CD8-positive, alpha-beta T cell (primary cell): ENCODE measurements at regions of chr11 and their contacts with region 1.

Region 1: GRCh38 chr11:123478352-123478987 is 48.4 kb downstream of the GRAMD1B start:
- DNase-seq: peak in 5 of 9 experiments; percentile 12 to 76 (median 59)
- ATAC-seq: peak; percentile 37
- H3K4me3 ChIP-seq: peak overlapping the region in 1 of 2 experiments; percentile 2
- H3K4me3 Mint-ChIP-seq: peak overlapping the region; percentile 13
- H3K27ac ChIP-seq: no peak overlapping the region
- H3K27ac Mint-ChIP-seq: no peak overlapping the region
- H3K4me1 ChIP-seq: no peaks in the 10 kb centered on the region
- H3K4me1 Mint-ChIP-seq: peaks cover 18% of the 10 kb centered on the region
- H3K27me3 ChIP-seq: no peaks in the 10 kb centered on the region
- H3K27me3 Mint-ChIP-seq: no peaks in the 10 kb centered on the region
- CTCF ChIP-seq: peak; percentile 93

Region 2: GRCh38 chr11:122981388-122982264 is 496.8 kb before region 1 on chr11 and contains the start of gene BSX:
- CTCF ChIA-PET with region 1: no interaction called
- POLR2A ChIA-PET with region 1: no interaction called
- intact Hi-C with region 1: no loop called
- DNase-seq: peak; percentile 24 to 65 (median 60)
- ATAC-seq: peak; percentile 79
- H3K4me3 ChIP-seq: no peak within 1 kb of the TSS
- H3K4me3 Mint-ChIP-seq: no peak within 1 kb of the TSS
- H3K27ac ChIP-seq: no peak within 1 kb of the TSS
- H3K27ac Mint-ChIP-seq: no peak within 1 kb of the TSS
- H3K4me1 ChIP-seq: peaks cover 23% of the 10 kb centered on the region
- H3K4me1 Mint-ChIP-seq: peaks cover 35% of the 10 kb centered on the region
- H3K27me3 ChIP-seq: peaks cover 44 to 70% of the 10 kb centered on the region in 2 experiments
- H3K27me3 Mint-ChIP-seq: peaks cover 81% of the 10 kb centered on the region
- CTCF ChIP-seq: no peak
- total RNA-seq, gene BSX: not detected

Region 3: DNA sequence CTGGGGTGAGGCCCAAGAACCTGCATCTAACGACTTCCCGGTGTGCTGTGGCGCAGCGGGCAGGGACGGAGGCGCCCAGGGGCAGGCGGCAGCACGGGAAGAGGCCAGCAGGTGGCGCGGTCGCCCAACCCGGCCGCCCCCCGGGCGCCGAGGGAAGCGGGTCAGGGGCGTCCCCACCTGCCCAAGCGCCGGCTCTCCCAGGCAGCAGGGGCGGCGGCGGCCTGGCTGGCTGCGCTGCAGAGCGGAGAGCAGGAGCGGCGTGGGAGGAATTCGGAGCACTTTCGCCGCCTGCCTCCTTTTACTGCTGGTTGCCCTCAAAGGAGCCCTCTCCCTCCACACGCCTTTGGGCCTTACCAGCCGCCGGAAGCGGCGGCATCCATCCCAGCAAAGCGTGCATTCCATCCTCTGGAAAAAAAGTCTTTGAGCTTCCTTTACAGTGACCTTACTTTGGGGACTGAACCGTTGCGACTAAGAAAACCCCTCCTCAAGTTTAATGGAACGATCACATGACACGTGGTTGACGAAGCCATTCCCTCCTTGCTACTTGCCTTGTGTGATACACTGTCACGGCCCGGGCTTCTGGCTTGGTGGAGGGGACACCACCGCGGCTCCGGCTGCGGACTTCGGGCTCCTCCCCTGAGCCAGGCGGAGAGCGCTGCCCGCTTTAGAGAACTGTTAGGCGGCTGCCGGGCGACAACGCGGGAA is 176.6 kb before region 1 on chr11:
- CTCF ChIA-PET with region 1: interaction called, 13 read pairs
- POLR2A ChIA-PET with region 1: no interaction called
- intact Hi-C with region 1: loop called (anchors 1 kb)
- DNase-seq: peak; percentile 34 to 80 (median 61)
- ATAC-seq: peak; percentile 79
- H3K4me3 ChIP-seq: peak overlapping the region; percentile 45
- H3K4me3 Mint-ChIP-seq: peak overlapping the region; percentile 70
- H3K27ac ChIP-seq: no peak overlapping the region
- H3K27ac Mint-ChIP-seq: no peak overlapping the region
- H3K4me1 ChIP-seq: peaks cover 10% of the 10 kb centered on the region
- H3K4me1 Mint-ChIP-seq: peaks cover 20% of the 10 kb centered on the region
- H3K27me3 ChIP-seq: no peaks in the 10 kb centered on the region
- H3K27me3 Mint-ChIP-seq: peaks cover 5% of the 10 kb centered on the region
- CTCF ChIP-seq: peak; percentile 76

Region 4: DNA sequence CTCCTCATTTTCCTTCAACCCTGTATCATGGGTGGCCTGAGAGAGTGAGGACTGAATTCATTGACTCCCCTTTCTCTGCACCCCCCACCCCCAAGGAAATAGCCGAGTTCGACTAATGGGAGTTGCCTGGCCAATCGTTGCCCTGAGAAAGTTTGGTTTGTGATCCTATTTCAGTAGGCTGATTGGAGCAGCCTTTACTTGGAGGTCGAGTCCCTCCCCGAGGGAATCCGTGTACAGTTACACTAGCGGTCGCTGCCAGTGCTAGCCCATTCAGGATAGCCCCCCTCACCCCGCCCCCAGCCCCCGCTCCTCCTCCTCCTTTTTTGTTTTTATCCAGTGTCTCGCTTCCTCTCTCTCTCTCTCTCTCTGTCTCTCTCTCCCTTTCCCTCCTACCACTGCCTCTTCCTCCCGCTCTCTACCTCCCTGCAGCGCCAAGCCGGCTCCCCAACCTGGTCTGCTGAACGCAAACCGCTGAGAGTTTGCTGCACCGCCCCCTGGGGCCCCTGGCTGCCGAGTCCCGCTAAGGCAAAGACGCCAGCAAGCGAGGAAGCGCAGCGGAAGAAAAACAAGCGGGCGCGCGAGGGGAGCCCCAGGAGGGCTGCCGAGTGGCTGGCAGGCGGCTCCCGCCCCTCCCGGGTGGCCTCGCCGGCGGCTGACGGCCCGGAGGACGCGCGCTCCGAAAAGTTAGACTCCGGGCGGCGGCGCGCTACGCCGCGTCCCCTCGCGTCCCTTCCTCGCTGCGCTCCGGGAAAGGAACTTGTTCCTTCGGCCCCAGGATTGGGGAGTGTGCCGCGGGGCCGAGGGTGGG is 48.4 kb before region 1 on chr11 and contains the start of gene GRAMD1B:
- CTCF ChIA-PET with region 1: interaction called, 8 read pairs
- POLR2A ChIA-PET with region 1: interaction called, 3 read pairs
- intact Hi-C with region 1: loop called in 1 of 2 experiments (anchors 1 kb)
- DNase-seq: peak; percentile 48 to 86 (median 74)
- ATAC-seq: peak; percentile 86
- H3K4me3 ChIP-seq: peak within 1 kb of the TSS; percentile 61 to 70
- H3K4me3 Mint-ChIP-seq: peak within 1 kb of the TSS; percentile 91
- H3K27ac ChIP-seq: peak within 1 kb of the TSS; percentile 53 to 54
- H3K27ac Mint-ChIP-seq: peak within 1 kb of the TSS; percentile 92
- H3K4me1 ChIP-seq: peaks cover 14% of the 10 kb centered on the region
- H3K4me1 Mint-ChIP-seq: peaks cover 22% of the 10 kb centered on the region
- H3K27me3 ChIP-seq: no peaks in the 10 kb centered on the region
- H3K27me3 Mint-ChIP-seq: no peaks in the 10 kb centered on the region
- CTCF ChIP-seq: peak; percentile 18
- total RNA-seq, gene GRAMD1B: 18.6 to 20.7 TPM